Caco-2 (cell line): ENCODE measurements at regions of chr12 and their contacts with region 1.

Region 1: DNA sequence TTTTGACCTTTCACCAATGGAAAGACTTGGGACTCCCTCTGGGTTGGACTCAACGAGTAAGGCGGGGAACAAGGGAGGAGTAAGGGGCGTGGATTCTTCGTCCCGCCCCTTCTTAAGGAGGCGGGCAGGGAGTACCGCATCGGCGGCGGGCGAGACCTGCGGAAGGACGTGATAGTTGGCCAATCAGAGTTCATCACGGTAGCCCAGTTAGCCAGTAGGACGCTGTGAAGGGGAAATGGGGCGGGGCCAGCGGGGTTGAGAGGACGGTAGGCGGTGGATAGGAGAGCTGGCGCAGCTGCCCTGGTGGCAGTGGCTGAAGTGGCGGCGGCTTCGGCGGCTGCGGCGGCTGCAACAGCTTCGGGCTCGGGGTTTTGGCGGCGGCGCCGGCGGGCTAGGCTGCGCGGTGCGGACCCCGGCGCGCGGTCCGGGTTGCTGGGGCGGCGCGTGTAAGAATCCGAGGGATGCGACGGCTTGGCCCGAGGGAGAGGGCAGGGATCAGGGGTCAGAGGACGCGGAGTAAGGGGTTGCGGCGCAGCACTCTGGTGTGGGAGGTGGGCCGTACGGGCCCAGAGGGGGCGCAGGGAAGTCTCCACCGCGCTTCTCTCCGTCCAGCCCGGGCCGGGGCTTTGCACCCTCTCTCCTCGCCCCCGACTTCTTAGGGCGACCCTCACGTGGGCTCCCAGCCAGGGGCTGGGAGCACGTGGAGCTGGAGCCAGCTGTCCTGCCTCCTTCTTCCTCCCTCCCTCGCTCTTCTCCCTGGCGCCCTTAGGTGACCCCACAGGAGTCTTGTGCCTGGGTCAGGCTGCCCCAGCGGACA is at the start of gene TPCN1:
- DNase-seq: peak; percentile 99
- H3K4me3 ChIP-seq: peak within 1 kb of the TSS; percentile 73
- H3K4me3 Mint-ChIP-seq: peak within 1 kb of the TSS; percentile 79
- H3K27ac Mint-ChIP-seq: peak within 1 kb of the TSS; percentile 83
- H3K4me1 ChIP-seq: peaks cover 16% of the 10 kb centered on the region; the same call in 1 of the 2 replicates
- H3K4me1 Mint-ChIP-seq: no peaks in the 10 kb centered on the region
- H3K27me3 ChIP-seq: no peaks in the 10 kb centered on the region
- H3K27me3 Mint-ChIP-seq: no peaks in the 10 kb centered on the region
- CTCF ChIP-seq: no peak
- total RNA-seq, gene TPCN1: 54.4 and 55.9 TPM in 2 replicates

Region 2: GRCh38 chr12:113235976-113236856 is 14.8 kb after region 1 on chr12:
- CTCF ChIA-PET with region 1: no interaction called
- POLR2A ChIA-PET with region 1: interaction called, 38 read pairs
- intact Hi-C with region 1: loop called (anchors 2 kb)
- DNase-seq: no peak
- H3K4me3 ChIP-seq: no peak overlapping the region
- H3K4me3 Mint-ChIP-seq: no peak overlapping the region
- H3K27ac Mint-ChIP-seq: peak overlapping the region; percentile 56
- H3K4me1 ChIP-seq: peaks cover 54% of the 10 kb centered on the region
- H3K4me1 Mint-ChIP-seq: peaks cover 48% of the 10 kb centered on the region
- H3K27me3 ChIP-seq: no peaks in the 10 kb centered on the region
- H3K27me3 Mint-ChIP-seq: no peaks in the 10 kb centered on the region
- CTCF ChIP-seq: no peak

Region 3: DNA sequence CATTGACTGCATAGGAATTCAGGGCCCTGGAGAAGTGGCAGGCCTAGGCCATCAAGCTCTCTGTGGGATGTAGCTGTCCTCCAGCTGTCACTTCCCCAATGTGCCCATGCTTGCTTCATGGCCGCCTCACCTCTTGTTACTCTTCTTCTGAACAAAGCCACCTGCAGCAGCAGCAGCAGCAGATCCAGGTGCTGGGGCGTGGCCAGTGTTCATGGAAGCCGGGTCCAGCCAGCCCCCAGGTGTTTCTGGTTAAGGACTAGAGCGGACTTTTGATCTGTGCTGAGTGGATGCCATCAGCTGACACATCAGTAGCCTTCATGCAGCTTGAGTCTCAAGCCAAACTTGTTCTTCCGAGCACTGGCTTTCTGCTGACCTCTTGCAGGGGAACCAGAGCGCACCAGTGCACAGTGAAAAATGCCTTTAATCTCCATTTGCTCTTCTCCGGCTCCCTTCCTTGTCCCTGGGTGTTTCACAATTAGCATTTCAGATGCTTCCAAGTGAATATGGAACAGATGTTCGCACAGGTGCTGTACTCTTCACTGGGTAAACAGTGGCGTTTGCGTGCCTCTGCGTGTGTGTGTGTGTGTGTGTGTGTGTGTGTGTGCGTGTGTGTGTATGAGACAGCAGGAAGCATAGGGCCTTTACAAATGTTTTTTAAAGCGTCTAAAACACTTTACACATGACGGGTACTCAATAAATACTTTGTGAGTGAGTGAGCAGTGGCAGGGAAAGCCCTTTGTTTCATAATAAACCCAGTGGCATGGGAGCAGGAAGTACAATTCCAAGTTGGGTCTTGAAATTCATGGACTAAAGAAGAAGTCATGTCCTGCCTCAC is 20.0 kb after region 1 on chr12:
- CTCF ChIA-PET with region 1: interaction called, 6 read pairs
- POLR2A ChIA-PET with region 1: interaction called, 42 read pairs
- intact Hi-C with region 1: loop called (anchors 2 kb)
- DNase-seq: peak; percentile 82 to 87
- H3K4me3 ChIP-seq: no peak overlapping the region
- H3K4me3 Mint-ChIP-seq: peak overlapping the region; percentile 12
- H3K27ac Mint-ChIP-seq: peak overlapping the region; percentile 93
- H3K4me1 ChIP-seq: peaks cover 53% of the 10 kb centered on the region
- H3K4me1 Mint-ChIP-seq: peaks cover 48% of the 10 kb centered on the region
- H3K27me3 ChIP-seq: no peaks in the 10 kb centered on the region
- H3K27me3 Mint-ChIP-seq: no peaks in the 10 kb centered on the region
- CTCF ChIP-seq: no peak

Region 4: DNA sequence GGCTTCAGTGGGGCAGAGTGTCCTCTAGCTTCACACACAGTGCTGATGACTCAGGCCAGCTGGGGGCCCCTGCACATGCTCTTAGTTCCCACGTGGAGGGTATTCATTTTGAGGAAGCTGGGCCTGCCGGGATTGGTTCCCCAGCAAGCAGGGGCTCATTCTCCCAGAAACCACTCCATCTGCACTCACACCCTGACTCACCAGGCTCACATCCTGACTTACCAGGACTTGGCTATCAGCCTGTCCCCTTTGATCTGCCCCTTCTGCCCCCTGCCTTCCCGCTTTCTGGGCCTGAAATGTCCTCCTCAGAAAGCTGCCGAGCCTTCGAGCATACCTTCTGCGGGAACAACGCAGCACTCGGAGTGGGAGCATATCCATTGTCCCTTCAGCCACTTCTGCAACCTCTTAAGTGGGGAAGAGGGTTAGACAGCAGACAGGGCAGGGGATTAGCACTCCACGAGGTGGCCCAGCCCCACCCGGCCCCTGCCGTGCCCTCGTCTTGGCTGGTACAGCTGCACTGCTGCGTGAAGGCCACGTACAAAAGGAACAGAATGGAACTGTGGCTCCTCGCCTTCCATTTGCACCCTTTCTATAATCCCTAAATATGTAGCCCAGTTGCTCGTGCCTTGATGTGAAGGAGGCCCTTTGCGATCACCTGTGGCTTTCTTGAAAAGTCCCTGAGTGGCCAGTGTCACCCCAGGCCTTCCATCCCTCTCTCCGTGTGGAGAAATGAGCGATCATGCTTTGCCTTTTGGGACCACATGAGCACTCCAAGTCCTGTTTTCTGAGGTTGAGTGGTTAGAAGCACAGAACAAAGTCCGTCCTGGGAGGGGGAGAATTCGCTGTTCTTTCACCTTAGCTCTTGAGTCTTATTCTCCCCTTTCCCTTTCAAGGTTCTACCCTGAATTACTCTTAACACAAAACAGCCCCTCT is 26.0 kb after region 1 on chr12:
- CTCF ChIA-PET with region 1: interaction called, 6 read pairs
- POLR2A ChIA-PET with region 1: interaction called, 42 read pairs
- intact Hi-C with region 1: no loop called
- DNase-seq: no peak
- H3K4me3 ChIP-seq: no peak overlapping the region
- H3K4me3 Mint-ChIP-seq: no peak overlapping the region
- H3K27ac Mint-ChIP-seq: peak overlapping the region; percentile 99
- H3K4me1 ChIP-seq: peaks cover 30% of the 10 kb centered on the region
- H3K4me1 Mint-ChIP-seq: peaks cover 49% of the 10 kb centered on the region
- H3K27me3 ChIP-seq: no peaks in the 10 kb centered on the region
- H3K27me3 Mint-ChIP-seq: no peaks in the 10 kb centered on the region
- CTCF ChIP-seq: no peak

Region 5: DNA sequence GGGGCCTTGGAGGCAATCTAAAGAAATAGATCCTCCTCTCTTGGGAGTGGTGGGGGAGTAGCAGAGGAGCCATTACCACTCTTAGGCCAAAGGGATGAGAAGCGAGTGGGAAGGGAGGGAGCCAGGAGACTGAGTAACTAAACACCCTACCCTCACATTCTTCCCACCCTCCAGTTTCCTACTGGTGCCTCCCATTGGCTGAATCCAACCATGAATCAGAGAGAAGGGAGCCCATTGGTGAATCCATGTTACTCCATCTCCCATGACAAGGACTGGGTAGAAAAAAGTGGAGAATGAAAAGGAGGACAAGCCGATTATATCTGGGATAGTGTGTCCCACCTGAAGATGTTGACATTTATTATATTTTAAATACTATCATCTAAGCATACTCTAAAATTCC is 327.1 kb after region 1 on chr12:
- CTCF ChIA-PET with region 1: no interaction called
- POLR2A ChIA-PET with region 1: no interaction called
- intact Hi-C with region 1: no loop called
- DNase-seq: no peak
- H3K4me3 ChIP-seq: no peak overlapping the region
- H3K4me3 Mint-ChIP-seq: no peak overlapping the region
- H3K27ac Mint-ChIP-seq: no peak overlapping the region
- H3K4me1 ChIP-seq: no peaks in the 10 kb centered on the region
- H3K4me1 Mint-ChIP-seq: no peaks in the 10 kb centered on the region
- H3K27me3 ChIP-seq: no peaks in the 10 kb centered on the region
- H3K27me3 Mint-ChIP-seq: peaks cover 10% of the 10 kb centered on the region
- CTCF ChIP-seq: no peak